ENCODE measurements at regions of chr3 and their contacts with region 1.

Region 1: GRCh38 chr3:157159762-157160657 is at the start of gene CCNL1:
- DNase-seq: peak; percentile 92 to 97
- H3K4me3 ChIP-seq: peak within 1 kb of the TSS; percentile 93
- H3K27ac ChIP-seq: peak within 1 kb of the TSS; percentile 100
- H3K4me1 ChIP-seq: peaks cover 50% of the 10 kb centered on the region
- H3K27me3 ChIP-seq: no peaks in the 10 kb centered on the region
- CTCF ChIP-seq: no peak
- total RNA-seq, gene CCNL1: 91.3 and 101 TPM in 2 replicates

Region 2: DNA sequence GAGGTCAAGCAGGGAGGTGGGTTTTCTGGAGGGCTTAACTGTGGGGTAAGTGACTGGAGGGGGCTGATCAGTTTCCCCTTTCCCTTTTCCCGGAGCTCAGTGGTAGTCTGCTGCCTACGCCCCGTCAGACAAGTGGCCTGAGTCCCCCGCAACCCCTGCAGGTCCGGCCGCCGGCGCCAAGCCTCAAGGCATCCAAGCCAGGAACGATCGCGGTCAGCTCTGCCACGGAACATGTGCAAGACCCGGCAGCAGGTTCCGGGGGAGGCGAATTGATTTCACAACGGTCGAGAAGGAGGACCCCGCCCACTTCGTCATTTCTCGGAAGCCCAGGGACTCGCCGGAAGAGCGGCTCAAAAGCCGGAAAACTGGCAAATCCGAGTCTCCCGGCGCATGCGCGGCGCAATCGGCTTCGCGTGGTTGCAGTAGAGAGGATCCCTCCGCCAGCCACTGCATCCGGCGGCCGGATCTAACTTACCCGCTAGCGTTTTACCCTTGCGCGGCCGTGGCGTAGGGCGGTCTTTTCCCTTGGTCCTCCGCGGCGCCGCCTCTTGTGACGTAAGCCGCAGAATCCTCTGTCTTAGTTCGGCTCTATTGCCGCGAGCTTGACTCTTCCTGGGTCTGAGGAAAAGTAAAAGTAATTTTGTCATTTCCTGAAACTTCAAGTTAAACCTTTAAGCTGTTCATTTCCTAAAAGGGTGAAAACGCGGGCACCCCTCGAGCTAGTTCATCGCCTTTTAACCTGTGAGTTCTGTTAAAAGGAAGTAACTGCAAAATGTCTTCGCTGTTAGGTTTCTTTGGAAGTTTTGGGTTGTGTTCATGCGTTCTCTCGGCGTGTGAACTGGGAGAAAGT is 14.9 kb after region 1 on chr3:
- CTCF ChIA-PET with region 1: interaction called, 5 read pairs
- POLR2A ChIA-PET with region 1: interaction called, 111 read pairs
- intact Hi-C with region 1: loop called (anchors 1 kb)
- DNase-seq: peak; percentile 99
- H3K4me3 ChIP-seq: peak overlapping the region; percentile 71
- H3K27ac ChIP-seq: peak overlapping the region; percentile 94
- H3K4me1 ChIP-seq: peaks cover 22% of the 10 kb centered on the region
- H3K27me3 ChIP-seq: no peaks in the 10 kb centered on the region
- CTCF ChIP-seq: no peak

Region 3: GRCh38 chr3:157300094-157300493 is 140.1 kb after region 1 on chr3:
- CTCF ChIA-PET with region 1: no interaction called
- POLR2A ChIA-PET with region 1: no interaction called
- intact Hi-C with region 1: no loop called
- DNase-seq: no peak
- H3K4me3 ChIP-seq: no peak overlapping the region
- H3K27ac ChIP-seq: no peak overlapping the region
- H3K4me1 ChIP-seq: no peaks in the 10 kb centered on the region
- H3K27me3 ChIP-seq: no peaks in the 10 kb centered on the region
- CTCF ChIP-seq: no peak

Region 4: DNA sequence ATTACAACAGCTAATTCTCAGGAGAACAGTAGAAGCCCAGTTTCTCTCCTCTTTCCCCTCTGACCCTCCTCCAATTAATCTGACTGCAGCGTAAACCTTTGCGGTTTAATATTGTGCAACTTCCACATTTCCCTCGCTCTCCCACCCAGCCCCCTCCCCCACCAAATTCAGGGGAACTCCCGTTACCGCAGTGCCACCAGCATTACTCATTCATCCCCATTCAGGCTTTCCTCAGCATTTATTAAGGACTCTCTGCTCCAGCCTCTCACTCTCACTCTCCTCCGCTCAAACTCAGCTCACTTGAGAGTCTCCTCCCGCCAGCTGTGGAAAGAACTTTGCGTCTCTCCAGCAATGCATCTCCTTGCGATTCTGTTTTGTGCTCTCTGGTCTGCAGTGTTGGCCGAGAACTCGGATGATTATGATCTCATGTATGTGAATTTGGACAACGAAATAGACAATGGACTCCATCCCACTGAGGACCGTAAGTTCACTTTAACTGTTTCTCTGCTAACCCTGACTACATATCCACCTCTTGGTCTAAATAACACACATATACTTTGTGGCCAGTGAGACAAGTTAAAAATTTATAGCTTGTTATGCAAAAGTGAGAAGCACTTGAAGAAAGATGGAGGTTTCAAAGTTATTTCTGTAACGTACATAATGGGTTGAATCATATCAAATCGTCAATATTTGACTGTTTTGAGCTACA is 276.7 kb after region 1 on chr3 and contains the start of gene PTX3:
- CTCF ChIA-PET with region 1: no interaction called
- POLR2A ChIA-PET with region 1: no interaction called
- intact Hi-C with region 1: loop called (anchors 5 kb)
- DNase-seq: peak; percentile 22 to 81
- H3K4me3 ChIP-seq: peak within 1 kb of the TSS; percentile 91
- H3K27ac ChIP-seq: peak within 1 kb of the TSS; percentile 63
- H3K4me1 ChIP-seq: peaks cover 25% of the 10 kb centered on the region
- H3K27me3 ChIP-seq: no peaks in the 10 kb centered on the region
- CTCF ChIP-seq: no peak
- total RNA-seq, gene PTX3: 0.59 and 1.1 TPM in 2 replicates

Region 5: DNA sequence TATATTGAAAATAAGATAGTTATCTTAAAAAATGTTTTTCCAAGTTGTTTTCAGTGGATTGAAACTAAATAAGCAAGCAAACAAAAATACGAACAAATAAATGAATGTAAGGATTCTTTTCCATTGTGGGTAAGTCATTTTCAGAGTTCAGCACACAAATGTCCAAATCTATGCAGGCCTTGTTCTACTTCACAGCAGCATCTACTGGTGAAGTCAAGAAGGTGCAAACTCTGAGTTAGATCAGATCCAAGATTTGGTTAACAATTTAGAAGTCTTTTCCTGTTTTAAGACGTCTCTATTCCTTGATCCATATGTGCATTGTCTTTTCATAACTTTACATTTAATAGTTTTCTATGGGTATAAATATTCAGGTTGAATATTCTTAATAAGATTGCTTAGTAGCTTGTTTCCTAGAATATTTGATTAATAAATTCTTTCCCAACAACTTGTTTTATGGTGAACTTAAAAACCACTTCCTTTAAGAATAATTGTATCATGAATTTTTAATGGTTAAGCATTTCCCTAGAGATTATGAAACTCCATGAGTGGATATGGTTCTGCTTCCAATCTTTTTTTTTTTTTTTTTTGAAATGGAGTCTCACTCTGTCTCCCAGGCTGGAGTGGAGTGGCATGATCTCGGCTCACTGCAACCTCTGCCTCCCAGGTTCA is 287.1 kb after region 1 on chr3:
- CTCF ChIA-PET with region 1: no interaction called
- POLR2A ChIA-PET with region 1: no interaction called
- intact Hi-C with region 1: loop called (anchors 1 kb)
- DNase-seq: no peak
- H3K4me3 ChIP-seq: no peak overlapping the region
- H3K27ac ChIP-seq: no peak overlapping the region
- H3K4me1 ChIP-seq: peaks cover 18% of the 10 kb centered on the region
- H3K27me3 ChIP-seq: no peaks in the 10 kb centered on the region
- CTCF ChIP-seq: peak; percentile 70

Measured in PC-9 (cell line).